ENCODE measurements at regions of chr1 and their contacts with region 1.

Region 1: GRCh38 chr1:20696397-20697329 is 21.1 kb downstream of the KIF17 start:
- DNase-seq: peak; percentile 90
- H3K4me3 Mint-ChIP-seq: peak overlapping the region; percentile 89
- H3K27ac Mint-ChIP-seq: peak overlapping the region; percentile 34
- H3K4me1 Mint-ChIP-seq: peaks cover 7% of the 10 kb centered on the region
- H3K27me3 Mint-ChIP-seq: peaks cover 7% of the 10 kb centered on the region

Region 2: GRCh38 chr1:20732588-20733360 is 36.1 kb after region 1 on chr1 and contains the start of gene SH2D5:
- intact Hi-C with region 1: loop called (anchors 2 kb)
- DNase-seq: peak; percentile 90
- H3K4me3 Mint-ChIP-seq: peak within 1 kb of the TSS; percentile 88
- H3K27ac Mint-ChIP-seq: peak within 1 kb of the TSS; percentile 70
- H3K4me1 Mint-ChIP-seq: peaks cover 14% of the 10 kb centered on the region
- H3K27me3 Mint-ChIP-seq: peaks cover 37% of the 10 kb centered on the region
- total RNA-seq, gene SH2D5: 0.23 and 0.24 TPM in 2 replicates

Region 3: GRCh38 chr1:21200767-21201166 is 504.1 kb after region 1 on chr1:
- intact Hi-C with region 1: loop called (anchors 1 kb)
- DNase-seq: no peak
- H3K4me3 Mint-ChIP-seq: no peak overlapping the region
- H3K27ac Mint-ChIP-seq: no peak overlapping the region
- H3K4me1 Mint-ChIP-seq: no peaks in the 10 kb centered on the region
- H3K27me3 Mint-ChIP-seq: peaks cover 8% of the 10 kb centered on the region

Region 4: GRCh38 chr1:21406659-21407058 is 710.0 kb after region 1 on chr1:
- intact Hi-C with region 1: no loop called
- DNase-seq: no peak
- H3K4me3 Mint-ChIP-seq: no peak overlapping the region
- H3K27ac Mint-ChIP-seq: no peak overlapping the region
- H3K4me1 Mint-ChIP-seq: no peaks in the 10 kb centered on the region
- H3K27me3 Mint-ChIP-seq: peaks cover 20% of the 10 kb centered on the region